Activated T-helper 1 cell treated with anti-CD3 and anti-CD28 coated beads, Interleukin-12 subunit alpha, Interleukin-12 subunit beta, Interleukin-2, Interleukin-4 antibody, amounts not matched to agents 30 ng/mL and 10 ng/mL and 1 ng/mL, durations not matched to agents 14 hours and 24 hours and 36 hours (primary cell): ENCODE measurements at regions of chr17 and their contacts with region 1.

Region 1: DNA sequence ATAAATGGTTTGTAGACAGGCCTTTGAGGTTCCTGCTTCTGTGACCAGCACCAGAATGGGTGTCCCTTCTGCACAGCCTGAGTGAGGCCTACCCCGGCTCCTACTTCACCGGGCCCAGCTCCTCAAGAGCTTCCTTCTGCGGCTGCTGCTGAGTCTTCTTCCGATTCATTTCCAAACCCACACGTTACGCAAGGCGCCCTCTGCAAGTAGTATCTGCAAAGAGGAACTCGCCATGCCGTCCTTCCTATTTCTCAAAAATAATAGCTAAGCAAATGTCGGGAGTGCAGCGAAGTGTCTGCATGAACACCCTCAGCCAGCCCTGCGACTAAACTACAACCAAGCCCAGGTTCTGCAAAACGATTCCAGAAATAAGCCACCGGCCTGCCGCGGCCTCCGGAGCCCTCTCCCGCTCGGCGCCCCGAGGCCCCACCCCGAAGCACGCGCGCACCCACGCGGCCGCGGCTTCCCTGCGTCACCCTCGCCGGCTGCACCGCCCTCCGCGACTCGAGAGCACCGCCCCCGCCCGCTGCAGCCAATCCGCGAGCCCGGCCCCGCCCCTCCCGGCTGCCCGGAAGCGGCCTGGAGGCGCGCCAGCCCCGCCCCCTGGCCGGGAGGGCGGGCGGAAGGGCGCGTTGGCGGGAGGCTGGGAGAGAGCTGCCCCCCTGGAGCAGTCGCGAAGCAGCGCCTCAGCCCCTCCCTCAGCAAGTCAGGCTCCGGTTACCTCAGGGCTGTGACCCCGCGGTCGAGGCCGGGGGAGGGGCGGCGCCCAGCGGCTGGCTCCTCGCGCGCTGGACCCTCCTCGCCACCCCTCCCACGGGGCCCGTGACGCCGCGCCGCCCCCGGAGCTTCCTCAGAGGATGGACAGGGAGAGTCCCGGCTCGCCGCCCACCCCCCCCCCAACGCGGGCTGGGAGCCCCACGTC is 8.3 kb downstream of the MNT start:
- DNase-seq: peak; percentile 98
- H3K4me3 Mint-ChIP-seq: peak overlapping the region; percentile 88
- H3K27ac Mint-ChIP-seq: peak overlapping the region; percentile 96
- H3K4me1 Mint-ChIP-seq: peaks cover 34% of the 10 kb centered on the region
- H3K27me3 Mint-ChIP-seq: no peaks in the 10 kb centered on the region

Region 2: DNA sequence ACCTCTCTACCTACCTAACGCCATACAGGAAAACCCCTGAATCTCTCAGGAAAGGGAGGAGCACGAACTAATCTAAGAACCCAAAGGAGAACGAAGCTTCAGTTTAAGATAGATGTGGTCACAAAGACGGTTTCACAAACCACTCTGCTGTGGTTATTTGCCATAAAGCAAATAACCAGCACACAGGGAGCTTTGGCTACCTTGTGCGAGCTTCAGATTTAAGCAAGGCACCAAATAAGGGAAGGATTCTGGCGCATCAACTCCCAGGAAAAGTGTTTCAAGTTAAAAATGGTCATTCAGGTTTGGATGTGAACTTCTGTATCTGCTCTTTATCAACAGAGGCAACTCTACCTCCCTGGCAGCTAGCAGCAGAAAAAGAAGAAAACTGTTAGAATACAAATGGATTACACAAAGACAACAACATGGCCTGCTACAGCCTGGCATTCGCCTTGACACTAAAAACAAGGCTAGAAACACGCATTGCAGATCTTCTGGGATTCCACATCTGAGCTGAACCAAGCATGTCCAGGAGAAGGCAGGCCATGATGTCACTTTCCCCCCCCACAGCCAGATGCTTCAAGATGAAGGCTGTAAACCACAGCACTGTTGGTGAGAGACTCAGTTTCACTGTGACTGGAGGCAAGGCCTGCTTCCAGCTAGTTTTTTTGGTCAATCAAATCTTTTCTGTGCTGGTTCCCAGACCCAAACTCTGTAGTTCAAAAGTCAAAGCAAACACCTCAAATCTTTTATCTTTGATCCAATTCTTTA is 132.6 kb before region 1 on chr17:
- intact Hi-C with region 1: loop called (anchors 5 kb)
- DNase-seq: peak; percentile 76
- H3K4me3 Mint-ChIP-seq: peak overlapping the region; percentile 73
- H3K27ac Mint-ChIP-seq: peak overlapping the region; percentile 97
- H3K4me1 Mint-ChIP-seq: peaks cover 67% of the 10 kb centered on the region
- H3K27me3 Mint-ChIP-seq: no peaks in the 10 kb centered on the region

Region 3: DNA sequence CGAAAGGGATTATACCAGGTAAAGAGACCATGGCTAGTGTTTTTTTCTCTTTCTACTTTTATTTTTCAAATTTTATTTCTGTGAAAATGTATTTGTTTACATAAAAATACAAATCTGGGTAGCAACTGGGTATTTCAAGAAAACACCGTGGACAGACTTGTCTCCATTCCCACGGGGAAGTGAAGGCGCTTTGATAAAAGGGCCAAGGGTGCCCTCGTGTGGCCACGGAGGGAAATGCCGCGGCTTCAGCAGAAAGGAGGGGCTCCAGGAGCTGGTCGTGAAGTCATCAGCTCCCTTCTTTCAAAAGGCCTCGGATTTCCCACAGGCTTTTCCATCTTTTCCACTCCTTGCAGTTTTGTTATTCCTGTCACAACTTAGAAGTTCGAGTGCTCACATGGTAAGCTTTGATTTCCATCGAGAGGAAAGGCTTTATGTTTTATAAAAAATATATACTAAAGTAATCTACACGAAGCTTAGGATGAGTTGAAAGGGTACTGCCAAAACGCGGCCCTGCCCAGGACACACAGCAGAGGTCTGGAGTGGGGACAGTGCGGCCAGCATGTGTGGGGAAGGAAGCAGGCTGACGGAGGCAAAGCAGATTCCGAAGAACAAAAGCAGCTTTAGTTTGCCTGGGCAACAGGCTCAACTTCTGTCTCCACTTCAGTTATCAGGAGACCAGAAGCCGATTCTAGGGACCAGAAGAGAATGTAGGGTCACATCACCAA is 23.7 kb after region 1 on chr17:
- intact Hi-C with region 1: no loop called
- DNase-seq: peak; percentile 78
- H3K4me3 Mint-ChIP-seq: no peak overlapping the region
- H3K27ac Mint-ChIP-seq: no peak overlapping the region
- H3K4me1 Mint-ChIP-seq: no peaks in the 10 kb centered on the region
- H3K27me3 Mint-ChIP-seq: no peaks in the 10 kb centered on the region

Region 4: DNA sequence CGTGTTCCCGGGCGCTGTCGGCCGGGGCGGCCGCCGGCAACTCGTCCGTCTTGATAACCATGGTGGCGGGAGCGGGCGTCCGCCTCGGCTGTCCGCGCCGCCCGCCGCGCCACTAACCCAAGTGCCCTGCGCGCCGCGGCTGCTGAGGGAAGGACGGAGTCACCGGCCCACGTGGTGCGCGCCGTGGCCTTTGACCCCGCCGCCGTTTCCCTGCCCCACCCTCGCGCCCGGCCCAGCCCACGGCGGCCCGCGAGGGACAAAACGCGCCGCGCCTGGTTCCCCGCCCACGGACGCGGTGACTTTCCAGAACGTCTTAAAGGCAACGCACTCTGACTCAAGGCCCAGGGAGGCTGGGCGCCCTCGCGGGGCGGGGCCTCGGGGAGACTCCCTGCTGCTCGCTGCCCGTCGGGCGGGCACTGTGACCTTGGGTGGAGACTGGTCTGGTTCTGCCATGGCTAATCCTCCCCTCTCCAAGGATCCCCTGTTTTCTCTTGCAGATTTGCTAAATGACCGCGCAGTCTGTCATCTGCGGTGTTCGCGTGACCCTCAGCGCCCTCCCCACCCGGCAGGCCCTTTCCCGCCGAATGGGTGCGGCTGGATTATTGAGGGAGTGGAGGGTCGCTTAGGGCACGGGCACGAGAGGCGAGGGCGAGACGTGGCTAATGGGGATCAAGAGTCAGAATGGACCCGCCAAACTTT is 319.2 kb after region 1 on chr17 and contains the start of gene CLUH:
- intact Hi-C with region 1: loop called (anchors 2 kb)
- DNase-seq: peak; percentile 96
- H3K4me3 Mint-ChIP-seq: peak within 1 kb of the TSS; percentile 95
- H3K27ac Mint-ChIP-seq: peak within 1 kb of the TSS; percentile 92
- H3K4me1 Mint-ChIP-seq: peaks cover 32% of the 10 kb centered on the region
- H3K27me3 Mint-ChIP-seq: no peaks in the 10 kb centered on the region
- total RNA-seq, gene CLUH: 173 and 179 TPM in 2 replicates